MCF 10A (cell line): ENCODE measurements at regions of chr4 and their contacts with region 1.

Region 1: GRCh38 chr4:56530269-56531148 is 24.9 kb downstream of the ARL9 start:
- DNase-seq: peak; percentile 71
- H3K4me3 Mint-ChIP-seq: no peak overlapping the region
- H3K27ac Mint-ChIP-seq: no peak overlapping the region
- H3K4me1 Mint-ChIP-seq: no peaks in the 10 kb centered on the region
- H3K27me3 Mint-ChIP-seq: no peaks in the 10 kb centered on the region
- CTCF ChIP-seq: no peak

Region 2: GRCh38 chr4:55625835-55626234 is 904.7 kb before region 1 on chr4:
- CTCF ChIA-PET with region 1: no interaction called
- POLR2A ChIA-PET with region 1: no interaction called
- intact Hi-C with region 1: no loop called
- DNase-seq: no peak
- H3K4me3 Mint-ChIP-seq: no peak overlapping the region
- H3K27ac Mint-ChIP-seq: no peak overlapping the region
- H3K4me1 Mint-ChIP-seq: no peaks in the 10 kb centered on the region
- H3K27me3 Mint-ChIP-seq: no peaks in the 10 kb centered on the region
- CTCF ChIP-seq: no peak

Region 3: GRCh38 chr4:56544573-56545131 is 14.1 kb after region 1 on chr4:
- CTCF ChIA-PET with region 1: interaction called, 25 read pairs
- POLR2A ChIA-PET with region 1: interaction called, 3 read pairs
- intact Hi-C with region 1: no loop called
- DNase-seq: peak; percentile 77
- H3K4me3 Mint-ChIP-seq: peak overlapping the region; percentile 75
- H3K27ac Mint-ChIP-seq: no peak overlapping the region
- H3K4me1 Mint-ChIP-seq: peaks cover 5% of the 10 kb centered on the region
- H3K27me3 Mint-ChIP-seq: no peaks in the 10 kb centered on the region
- CTCF ChIP-seq: peak; percentile 96

Region 4: DNA sequence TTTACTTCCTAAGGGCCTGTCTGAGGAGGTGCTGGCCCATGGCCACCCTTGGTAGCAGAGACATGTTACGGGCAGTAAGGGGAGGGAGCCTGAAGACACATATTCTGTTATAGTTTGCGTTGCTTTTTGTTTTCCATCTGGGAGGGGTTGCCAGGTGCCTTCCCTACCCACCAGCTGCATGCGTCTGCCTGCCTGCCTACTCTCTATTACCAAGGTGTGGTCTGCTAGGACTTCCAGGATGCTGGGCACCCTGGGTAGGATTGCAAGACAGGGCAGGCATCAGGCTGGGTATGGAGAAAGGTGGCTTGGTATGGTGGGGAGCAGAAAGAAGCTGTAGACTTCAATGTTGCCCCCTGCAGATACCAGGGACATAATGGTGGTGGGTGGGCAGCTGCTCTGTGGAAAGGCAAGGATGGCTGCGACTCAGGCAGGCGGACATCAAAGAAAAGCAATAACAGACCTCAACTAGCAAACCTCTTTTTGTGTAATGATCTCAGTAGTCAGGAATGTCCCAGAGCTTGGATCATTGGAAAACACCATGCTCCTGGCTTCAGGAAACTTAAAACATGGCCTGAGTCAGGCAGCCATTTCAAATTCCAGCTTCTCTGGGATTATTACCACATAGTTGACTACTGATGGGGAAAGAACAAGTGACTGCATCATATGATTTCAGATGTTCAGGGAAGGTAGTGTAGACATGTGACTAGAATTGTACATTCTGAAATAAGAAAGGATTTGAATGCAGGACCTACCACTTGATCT is 82.8 kb after region 1 on chr4:
- CTCF ChIA-PET with region 1: no interaction called
- POLR2A ChIA-PET with region 1: no interaction called
- intact Hi-C with region 1: no loop called
- DNase-seq: peak; percentile 53
- H3K4me3 Mint-ChIP-seq: no peak overlapping the region
- H3K27ac Mint-ChIP-seq: peak overlapping the region; percentile 88
- H3K4me1 Mint-ChIP-seq: peaks cover 14% of the 10 kb centered on the region
- H3K27me3 Mint-ChIP-seq: no peaks in the 10 kb centered on the region
- CTCF ChIP-seq: no peak